Activated CD8-positive, alpha-beta T cell treated with anti-CD3 and anti-CD28 coated beads for 36 hours (primary cell): ENCODE measurements at regions of chr6 and their contacts with region 1.

Region 1: GRCh38 chr6:142112451-142113061 is 20.2 kb upstream of the GJE1 start:
- DNase-seq: peak; percentile 88
- ATAC-seq: no peak
- H3K4me3 Mint-ChIP-seq: no peak overlapping the region
- H3K27ac Mint-ChIP-seq: no peak overlapping the region
- H3K4me1 Mint-ChIP-seq: no peaks in the 10 kb centered on the region
- H3K27me3 Mint-ChIP-seq: peaks cover 5% of the 10 kb centered on the region
- CTCF ChIP-seq: peak; percentile 90

Region 2: GRCh38 chr6:141677598-141678211 is 434.9 kb before region 1 on chr6:
- CTCF ChIA-PET with region 1: no interaction called
- POLR2A ChIA-PET with region 1: no interaction called
- intact Hi-C with region 1: loop called (anchors 5 kb)
- DNase-seq: no peak
- ATAC-seq: no peak
- H3K4me3 Mint-ChIP-seq: no peak overlapping the region
- H3K27ac Mint-ChIP-seq: no peak overlapping the region
- H3K4me1 Mint-ChIP-seq: no peaks in the 10 kb centered on the region
- H3K27me3 Mint-ChIP-seq: peaks cover 1% of the 10 kb centered on the region
- CTCF ChIP-seq: no peak

Region 3: GRCh38 chr6:141988954-141989705 is 123.4 kb before region 1 on chr6:
- CTCF ChIA-PET with region 1: interaction called, 59 read pairs
- POLR2A ChIA-PET with region 1: no interaction called
- intact Hi-C with region 1: loop called (anchors 1 kb)
- DNase-seq: peak; percentile 40
- ATAC-seq: peak; percentile 53
- H3K4me3 Mint-ChIP-seq: no peak overlapping the region
- H3K27ac Mint-ChIP-seq: no peak overlapping the region
- H3K4me1 Mint-ChIP-seq: peaks cover 2% of the 10 kb centered on the region
- H3K27me3 Mint-ChIP-seq: peaks cover 6% of the 10 kb centered on the region
- CTCF ChIP-seq: peak; percentile 71

Region 4: GRCh38 chr6:142177201-142177600 is 64.6 kb after region 1 on chr6:
- CTCF ChIA-PET with region 1: no interaction called
- POLR2A ChIA-PET with region 1: no interaction called
- intact Hi-C with region 1: no loop called
- DNase-seq: no peak
- ATAC-seq: no peak
- H3K4me3 Mint-ChIP-seq: no peak overlapping the region
- H3K27ac Mint-ChIP-seq: no peak overlapping the region
- H3K4me1 Mint-ChIP-seq: no peaks in the 10 kb centered on the region
- H3K27me3 Mint-ChIP-seq: no peaks in the 10 kb centered on the region
- CTCF ChIP-seq: no peak